ENCODE measurements at regions of chr6 and their contacts with region 1.

Region 1: GRCh38 chr6:37483917-37484785 is 15.5 kb downstream of the CCDC167 start:
- DNase-seq: peak; percentile 56 to 85 (median 70)
- ATAC-seq: peak; percentile 85
- H3K4me3 ChIP-seq: no peak overlapping the region
- H3K4me3 Mint-ChIP-seq: no peak overlapping the region
- H3K27ac ChIP-seq: no peak overlapping the region
- H3K27ac Mint-ChIP-seq: peak overlapping the region in 2 of 9 donors; percentile 25 to 36
- H3K4me1 ChIP-seq: peaks cover 9 to 16% of the 10 kb centered on the region in 2 donors
- H3K4me1 Mint-ChIP-seq: peaks cover 13 to 35% (median 20%) of the 10 kb centered on the region in 7 donors
- H3K27me3 ChIP-seq: no peaks in the 10 kb centered on the region
- H3K27me3 Mint-ChIP-seq: no peaks in the 10 kb centered on the region

Region 2: GRCh38 chr6:37324131-37325033 is 159.8 kb before region 1 on chr6:
- CTCF ChIA-PET with region 1: no interaction called
- POLR2A ChIA-PET with region 1: no interaction called
- intact Hi-C with region 1: loop called in 1 of 2 experiments (anchors 10 kb)
- DNase-seq: no peak
- ATAC-seq: no peak
- H3K4me3 ChIP-seq: no peak overlapping the region
- H3K4me3 Mint-ChIP-seq: no peak overlapping the region
- H3K27ac ChIP-seq: no peak overlapping the region
- H3K27ac Mint-ChIP-seq: peak overlapping the region in 5 of 9 donors; percentile 2 to 48 (median 11)
- H3K4me1 ChIP-seq: no peaks in the 10 kb centered on the region
- H3K4me1 Mint-ChIP-seq: peaks cover 0 to 16% (median 4%) of the 10 kb centered on the region in 7 donors
- H3K27me3 ChIP-seq: no peaks in the 10 kb centered on the region
- H3K27me3 Mint-ChIP-seq: no peaks in the 10 kb centered on the region

Region 3: GRCh38 chr6:37381579-37381978 is 102.6 kb before region 1 on chr6:
- CTCF ChIA-PET with region 1: interaction called, 3 read pairs
- POLR2A ChIA-PET with region 1: no interaction called
- intact Hi-C with region 1: loop called in 1 of 2 experiments (anchors 5 kb)
- DNase-seq: peak in 7 of 9 donors; percentile 18 to 48 (median 35)
- ATAC-seq: peak; percentile 61
- H3K4me3 ChIP-seq: no peak overlapping the region
- H3K4me3 Mint-ChIP-seq: no peak overlapping the region
- H3K27ac ChIP-seq: no peak overlapping the region
- H3K27ac Mint-ChIP-seq: peak overlapping the region in 1 of 9 donors; percentile 19
- H3K4me1 ChIP-seq: no peaks in the 10 kb centered on the region
- H3K4me1 Mint-ChIP-seq: peaks cover 0 to 3% (median 0%) of the 10 kb centered on the region in 7 donors
- H3K27me3 ChIP-seq: no peaks in the 10 kb centered on the region
- H3K27me3 Mint-ChIP-seq: no peaks in the 10 kb centered on the region

Region 4: DNA sequence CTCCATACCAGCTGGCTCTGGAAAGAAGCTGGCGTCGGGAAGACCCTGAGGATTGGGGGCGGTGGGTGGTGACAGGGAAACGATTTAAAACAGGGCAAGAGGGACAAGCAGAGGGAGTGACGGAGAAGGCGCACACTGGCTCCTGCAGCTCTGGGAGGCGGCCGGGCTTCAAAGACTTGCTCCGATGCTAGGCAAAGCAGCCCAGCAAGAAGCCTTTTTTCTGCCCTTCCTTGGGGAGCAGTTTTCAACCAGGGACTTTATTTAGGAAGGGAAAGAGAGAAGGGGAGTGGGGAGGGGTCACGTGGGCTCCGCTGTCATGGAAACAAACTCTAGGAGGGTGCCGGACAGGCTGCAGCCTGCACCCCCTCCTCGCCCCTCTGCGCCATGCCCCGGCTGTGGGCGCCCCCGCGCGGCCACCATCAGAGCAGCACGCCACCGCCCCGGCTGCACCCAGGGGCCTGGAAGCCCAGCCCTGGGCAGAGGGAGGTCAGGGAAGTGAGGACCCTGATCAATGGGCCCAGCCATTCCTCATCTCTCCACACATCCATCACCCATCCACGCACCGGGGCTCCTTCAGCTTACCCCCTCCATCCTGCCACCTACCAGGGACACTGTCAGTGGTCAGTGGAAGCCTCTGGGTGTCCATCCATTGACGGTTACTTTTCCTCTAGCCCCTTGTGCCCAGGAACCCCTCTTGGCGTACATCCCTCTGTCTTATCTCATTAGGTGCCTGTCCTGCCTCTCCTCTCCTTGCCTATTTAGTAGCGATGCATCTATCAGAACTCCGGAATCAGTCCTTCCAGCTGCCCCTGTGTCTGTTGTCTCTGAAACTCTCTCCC is 82.2 kb after region 1 on chr6:
- CTCF ChIA-PET with region 1: interaction called, 31 read pairs
- POLR2A ChIA-PET with region 1: interaction called, 3 read pairs
- intact Hi-C with region 1: loop called (anchors 1 kb)
- DNase-seq: peak; percentile 45 to 86 (median 70)
- ATAC-seq: peak; percentile 93
- H3K4me3 ChIP-seq: peak overlapping the region; percentile 52
- H3K4me3 Mint-ChIP-seq: peak overlapping the region in 9 of 10 donors; percentile 37 to 80 (median 63)
- H3K27ac ChIP-seq: no peak overlapping the region
- H3K27ac Mint-ChIP-seq: peak overlapping the region in 2 of 9 donors; percentile 8 to 12
- H3K4me1 ChIP-seq: peaks cover 0 to 4% of the 10 kb centered on the region in 2 donors
- H3K4me1 Mint-ChIP-seq: peaks cover 6 to 21% (median 12%) of the 10 kb centered on the region in 7 donors
- H3K27me3 ChIP-seq: no peaks in the 10 kb centered on the region
- H3K27me3 Mint-ChIP-seq: peaks cover 3 to 28% (median 11%) of the 10 kb centered on the region in 5 donors

Region 5: DNA sequence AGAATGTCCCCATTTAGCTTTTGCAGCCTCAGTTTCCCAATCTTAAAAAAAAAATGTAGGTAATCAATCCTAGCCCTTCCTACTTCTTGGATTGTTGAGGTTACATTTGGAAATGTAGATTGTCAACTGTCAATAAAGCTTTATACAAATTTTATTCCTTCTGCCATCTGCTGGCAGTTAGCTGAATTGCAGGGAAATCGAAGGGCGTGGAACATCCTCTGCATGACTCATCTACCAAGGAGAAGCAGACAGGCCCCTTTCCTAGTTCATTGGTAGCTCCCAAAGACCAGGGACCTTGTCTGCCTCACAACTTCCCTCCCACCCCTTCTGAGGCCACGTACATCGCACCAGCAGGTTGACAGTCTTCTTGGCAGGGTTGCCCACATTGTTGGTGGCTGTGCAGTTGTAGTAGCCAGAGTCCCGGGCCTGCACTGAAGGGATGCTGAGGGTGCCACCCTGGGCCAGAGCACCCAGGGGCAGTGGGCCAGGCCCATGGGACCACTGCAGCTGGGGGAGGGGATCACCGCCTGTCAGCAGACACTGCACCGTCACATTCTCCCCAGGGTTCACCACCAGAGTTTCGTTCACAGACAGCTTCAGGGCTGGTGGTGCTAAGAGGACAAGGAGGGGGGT is 169.9 kb after region 1 on chr6:
- CTCF ChIA-PET with region 1: no interaction called
- POLR2A ChIA-PET with region 1: no interaction called
- intact Hi-C with region 1: loop called in 1 of 2 experiments (anchors 1 kb)
- DNase-seq: peak in 4 of 9 donors; percentile 29 to 49 (median 40)
- ATAC-seq: peak; percentile 45
- H3K4me3 ChIP-seq: no peak overlapping the region
- H3K4me3 Mint-ChIP-seq: no peak overlapping the region
- H3K27ac ChIP-seq: no peak overlapping the region
- H3K27ac Mint-ChIP-seq: peak overlapping the region in 1 of 9 donors; percentile 25
- H3K4me1 ChIP-seq: no peaks in the 10 kb centered on the region
- H3K4me1 Mint-ChIP-seq: peaks cover 0 to 19% (median 10%) of the 10 kb centered on the region in 7 donors
- H3K27me3 ChIP-seq: no peaks in the 10 kb centered on the region
- H3K27me3 Mint-ChIP-seq: peaks cover 10 to 31% (median 19%) of the 10 kb centered on the region in 5 donors

Region 6: GRCh38 chr6:37897321-37897720 is 413.2 kb after region 1 on chr6:
- CTCF ChIA-PET with region 1: no interaction called
- POLR2A ChIA-PET with region 1: no interaction called
- intact Hi-C with region 1: no loop called
- DNase-seq: no peak
- ATAC-seq: no peak
- H3K4me3 ChIP-seq: no peak overlapping the region
- H3K4me3 Mint-ChIP-seq: peak overlapping the region in 5 of 10 donors; percentile 5 to 50 (median 12)
- H3K27ac ChIP-seq: no peak overlapping the region
- H3K27ac Mint-ChIP-seq: no peak overlapping the region
- H3K4me1 ChIP-seq: peaks cover 0 to 4% of the 10 kb centered on the region in 2 donors
- H3K4me1 Mint-ChIP-seq: peaks cover 12 to 75% (median 68%) of the 10 kb centered on the region in 7 donors
- H3K27me3 ChIP-seq: no peaks in the 10 kb centered on the region
- H3K27me3 Mint-ChIP-seq: no peaks in the 10 kb centered on the region

Region 7: GRCh38 chr6:38117281-38117680 is 633.1 kb after region 1 on chr6:
- CTCF ChIA-PET with region 1: no interaction called
- POLR2A ChIA-PET with region 1: no interaction called
- intact Hi-C with region 1: no loop called
- DNase-seq: no peak
- ATAC-seq: no peak
- H3K4me3 ChIP-seq: no peak overlapping the region
- H3K4me3 Mint-ChIP-seq: no peak overlapping the region
- H3K27ac ChIP-seq: no peak overlapping the region
- H3K27ac Mint-ChIP-seq: peak overlapping the region in 2 of 9 donors; percentile 7 to 56
- H3K4me1 ChIP-seq: no peaks in the 10 kb centered on the region
- H3K4me1 Mint-ChIP-seq: peaks cover 3 to 23% (median 11%) of the 10 kb centered on the region in 7 donors
- H3K27me3 ChIP-seq: no peaks in the 10 kb centered on the region
- H3K27me3 Mint-ChIP-seq: no peaks in the 10 kb centered on the region

Measured in naive thymus-derived CD4-positive, alpha-beta T cell (primary cell).